BJ (cell line): ENCODE measurements at regions of chr3 and their contacts with region 1.

Region 1: GRCh38 chr3:64023187-64023848 is at the start of gene PSMD6:
- DNase-seq: no peak
- H3K4me3 ChIP-seq: peak within 1 kb of the TSS; percentile 94
- H3K27me3 ChIP-seq: peaks cover 3% of the 10 kb centered on the region; the same call in 1 of the 2 replicates
- CTCF ChIP-seq: peak; percentile 100
- polyA plus RNA-seq, gene PSMD6: 47.8 and 54.5 TPM in 2 replicates

Region 2: GRCh38 chr3:63159024-63159423 is 864.3 kb before region 1 on chr3:
- CTCF ChIA-PET with region 1: no interaction called
- POLR2A ChIA-PET with region 1: no interaction called
- DNase-seq: no peak
- H3K4me3 ChIP-seq: no peak overlapping the region
- H3K27me3 ChIP-seq: no peaks in the 10 kb centered on the region
- CTCF ChIP-seq: no peak

Region 3: DNA sequence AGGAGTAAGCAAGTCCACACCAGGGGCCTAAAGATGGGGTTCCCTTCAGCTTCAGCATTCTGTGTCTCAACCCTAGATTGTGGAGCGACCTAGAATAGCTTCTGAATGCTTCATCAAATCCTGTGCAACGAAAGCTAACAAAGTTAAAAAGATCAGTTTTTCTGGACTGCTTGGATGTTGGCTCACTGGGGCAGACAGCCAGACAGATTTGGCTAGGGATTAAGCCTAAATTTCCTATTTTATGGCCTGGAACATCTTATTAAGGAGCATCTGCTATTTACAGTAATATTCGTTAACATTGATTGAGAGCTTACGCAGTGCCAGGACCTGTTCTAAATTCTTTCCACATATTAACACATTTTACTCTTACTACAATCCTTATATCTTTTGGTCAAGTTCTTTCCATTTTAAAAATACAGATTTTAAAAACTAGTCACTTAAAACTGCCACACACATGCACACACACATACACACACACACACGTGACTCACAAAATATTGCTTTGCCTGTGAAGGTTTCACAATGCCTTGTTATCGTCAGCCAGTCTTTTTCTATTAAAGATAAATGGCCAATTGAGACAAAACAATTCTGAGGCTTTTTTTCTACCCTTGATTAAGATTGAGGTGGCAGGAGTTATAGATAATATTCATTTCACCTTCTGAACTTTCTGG is 544.2 kb before region 1 on chr3:
- CTCF ChIA-PET with region 1: no interaction called
- POLR2A ChIA-PET with region 1: no interaction called
- DNase-seq: no peak
- H3K4me3 ChIP-seq: no peak overlapping the region
- H3K27me3 ChIP-seq: no peaks in the 10 kb centered on the region
- CTCF ChIP-seq: no peak

Region 4: DNA sequence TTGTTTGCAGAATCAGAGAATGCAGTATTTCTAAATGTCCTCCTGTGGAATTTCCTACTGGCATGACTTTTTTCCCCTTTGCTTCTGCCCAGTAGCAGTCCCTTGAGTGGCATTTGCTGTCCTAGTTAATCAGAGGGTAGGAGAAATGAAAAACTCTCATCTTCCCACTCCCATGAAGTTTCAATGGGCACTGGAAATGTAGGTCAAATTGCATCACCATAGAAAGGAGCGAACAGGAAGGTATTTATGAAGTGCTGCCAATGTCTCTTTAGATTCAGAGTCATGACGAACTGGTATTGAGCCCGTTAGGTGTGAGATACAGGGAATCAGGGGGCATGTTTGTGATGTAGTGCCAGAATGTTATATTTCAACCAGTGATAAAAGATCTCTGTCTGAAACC is 136.5 kb before region 1 on chr3:
- CTCF ChIA-PET with region 1: no interaction called
- POLR2A ChIA-PET with region 1: no interaction called
- DNase-seq: no peak
- H3K4me3 ChIP-seq: no peak overlapping the region
- H3K27me3 ChIP-seq: no peaks in the 10 kb centered on the region
- CTCF ChIP-seq: no peak

Region 5: DNA sequence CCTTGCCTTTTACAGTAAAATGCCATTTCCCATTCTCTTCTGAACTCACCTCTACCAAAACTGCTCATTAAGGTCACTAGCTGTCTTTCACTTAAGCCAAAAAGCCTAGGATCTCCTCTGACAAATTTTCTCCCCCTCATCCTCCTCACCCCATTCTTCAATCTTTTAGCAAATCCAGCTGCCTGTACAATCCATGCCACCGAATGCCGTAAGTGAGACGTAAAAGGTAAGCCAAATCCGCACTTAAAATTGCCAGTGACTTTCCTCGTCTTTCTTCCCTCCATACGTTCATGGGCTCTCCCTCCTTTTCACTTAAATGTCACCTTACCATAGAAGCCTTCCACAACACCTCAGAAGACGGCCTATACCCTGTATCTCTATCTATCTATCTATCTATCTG is 13.8 kb before region 1 on chr3:
- CTCF ChIA-PET with region 1: interaction called, 10 read pairs
- POLR2A ChIA-PET with region 1: no interaction called
- DNase-seq: no peak
- H3K4me3 ChIP-seq: no peak overlapping the region
- H3K27me3 ChIP-seq: no peaks in the 10 kb centered on the region
- CTCF ChIP-seq: no peak

Region 6: GRCh38 chr3:64266065-64266931 is 243.0 kb after region 1 on chr3:
- CTCF ChIA-PET with region 1: interaction called, 10 read pairs
- POLR2A ChIA-PET with region 1: no interaction called
- DNase-seq: peak; percentile 92
- H3K4me3 ChIP-seq: peak overlapping the region; percentile 76
- H3K27me3 ChIP-seq: no peaks in the 10 kb centered on the region
- CTCF ChIP-seq: no peak

Region 7: GRCh38 chr3:64484289-64484992 is 461.1 kb after region 1 on chr3:
- CTCF ChIA-PET with region 1: interaction called, 123 read pairs
- POLR2A ChIA-PET with region 1: no interaction called
- DNase-seq: peak; percentile 13
- H3K4me3 ChIP-seq: no peak overlapping the region
- H3K27me3 ChIP-seq: peaks cover 2% of the 10 kb centered on the region
- CTCF ChIP-seq: peak; percentile 80